MCF 10A (cell line): ENCODE measurements at regions of chr13 and their contacts with region 1.

Region 1: GRCh38 chr13:24220086-24220703 is 59.7 kb downstream of the SPATA13 start:
- DNase-seq: peak; percentile 82
- H3K4me3 Mint-ChIP-seq: no peak overlapping the region
- H3K27ac Mint-ChIP-seq: no peak overlapping the region
- H3K4me1 Mint-ChIP-seq: no peaks in the 10 kb centered on the region
- H3K27me3 Mint-ChIP-seq: no peaks in the 10 kb centered on the region
- CTCF ChIP-seq: peak; percentile 66

Region 2: GRCh38 chr13:23921451-23921888 is 298.7 kb before region 1 on chr13:
- CTCF ChIA-PET with region 1: interaction called, 10 read pairs
- POLR2A ChIA-PET with region 1: interaction called, 3 read pairs
- intact Hi-C with region 1: loop called (anchors 1 kb)
- DNase-seq: peak; percentile 63
- H3K4me3 Mint-ChIP-seq: no peak overlapping the region
- H3K27ac Mint-ChIP-seq: no peak overlapping the region
- H3K4me1 Mint-ChIP-seq: no peaks in the 10 kb centered on the region
- H3K27me3 Mint-ChIP-seq: peaks cover 42% of the 10 kb centered on the region
- CTCF ChIP-seq: peak; percentile 63

Region 3: DNA sequence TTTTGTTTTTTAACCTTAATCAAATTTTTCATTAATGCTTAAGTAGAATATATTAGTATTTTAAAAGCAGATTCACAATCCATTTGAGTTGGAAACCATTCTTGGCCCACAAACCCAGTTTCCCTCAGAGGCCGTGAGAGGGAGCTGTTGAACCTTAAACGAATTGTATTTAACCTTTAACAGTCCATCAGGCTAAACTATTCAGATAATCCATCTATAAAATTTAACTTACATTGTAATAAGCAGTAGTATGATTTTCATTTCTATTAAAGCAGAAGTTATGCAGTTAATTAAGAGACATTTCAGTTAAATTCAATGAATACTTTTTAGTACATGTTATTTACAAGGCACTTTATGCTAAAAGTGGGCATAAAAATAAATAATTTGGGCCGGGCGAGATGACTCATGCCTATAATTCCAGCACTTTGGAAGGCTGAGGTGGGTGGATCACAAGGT is 199.8 kb before region 1 on chr13:
- CTCF ChIA-PET with region 1: interaction called, 74 read pairs
- POLR2A ChIA-PET with region 1: interaction called, 5 read pairs
- intact Hi-C with region 1: loop called (anchors 1 kb)
- DNase-seq: peak; percentile 73
- H3K4me3 Mint-ChIP-seq: no peak overlapping the region
- H3K27ac Mint-ChIP-seq: no peak overlapping the region
- H3K4me1 Mint-ChIP-seq: no peaks in the 10 kb centered on the region
- H3K27me3 Mint-ChIP-seq: no peaks in the 10 kb centered on the region
- CTCF ChIP-seq: peak; percentile 57